B cell (primary cell): ENCODE measurements at regions of chr11 and their contacts with region 1.

Region 1: GRCh38 chr11:33257897-33258630 is 883 bp downstream of the HIPK3 start:
- DNase-seq: peak; percentile 86
- ATAC-seq: peak; percentile 34
- H3K4me3 ChIP-seq: peak overlapping the region; percentile 78 to 97 (median 90)
- H3K4me3 Mint-ChIP-seq: peak overlapping the region; percentile 93
- H3K27ac ChIP-seq: peak overlapping the region; percentile 98 to 99
- H3K27ac Mint-ChIP-seq: peak overlapping the region; percentile 100
- H3K4me1 ChIP-seq: peaks cover 22 to 26% of the 10 kb centered on the region in 2 donors
- H3K4me1 Mint-ChIP-seq: peaks cover 49% of the 10 kb centered on the region
- H3K27me3 ChIP-seq: no peaks in the 10 kb centered on the region
- H3K27me3 Mint-ChIP-seq: no peaks in the 10 kb centered on the region
- CTCF ChIP-seq: no peak

Region 2: GRCh38 chr11:33039274-33040032 is 218.6 kb before region 1 on chr11 and contains the start of gene TCP11L1:
- CTCF ChIA-PET with region 1: no interaction called
- POLR2A ChIA-PET with region 1: no interaction called
- intact Hi-C with region 1: loop called (anchors 2 kb)
- DNase-seq: peak; percentile 90
- ATAC-seq: peak; percentile 84
- H3K4me3 ChIP-seq: peak within 1 kb of the TSS; percentile 77 to 99 (median 95)
- H3K4me3 Mint-ChIP-seq: peak within 1 kb of the TSS; percentile 96
- H3K27ac ChIP-seq: peak within 1 kb of the TSS; percentile 79 to 88
- H3K27ac Mint-ChIP-seq: peak within 1 kb of the TSS; percentile 94
- H3K4me1 ChIP-seq: peaks cover 8 to 18% of the 10 kb centered on the region in 2 donors
- H3K4me1 Mint-ChIP-seq: peaks cover 16% of the 10 kb centered on the region
- H3K27me3 ChIP-seq: no peaks in the 10 kb centered on the region
- H3K27me3 Mint-ChIP-seq: peaks cover 8% of the 10 kb centered on the region
- CTCF ChIP-seq: no peak
- total RNA-seq, gene TCP11L1: 19.7 and 19.8 TPM in 2 replicates

Region 3: GRCh38 chr11:33344611-33345010 is 86.5 kb after region 1 on chr11:
- CTCF ChIA-PET with region 1: no interaction called
- POLR2A ChIA-PET with region 1: no interaction called
- intact Hi-C with region 1: loop called (anchors 5 kb)
- DNase-seq: no peak
- ATAC-seq: no peak
- H3K4me3 ChIP-seq: no peak overlapping the region
- H3K4me3 Mint-ChIP-seq: no peak overlapping the region
- H3K27ac ChIP-seq: peak overlapping the region in 1 of 2 donors; percentile 21
- H3K27ac Mint-ChIP-seq: no peak overlapping the region
- H3K4me1 ChIP-seq: peaks cover 14 to 17% of the 10 kb centered on the region in 2 donors
- H3K4me1 Mint-ChIP-seq: peaks cover 23% of the 10 kb centered on the region
- H3K27me3 ChIP-seq: no peaks in the 10 kb centered on the region
- H3K27me3 Mint-ChIP-seq: no peaks in the 10 kb centered on the region
- CTCF ChIP-seq: no peak

Region 4: DNA sequence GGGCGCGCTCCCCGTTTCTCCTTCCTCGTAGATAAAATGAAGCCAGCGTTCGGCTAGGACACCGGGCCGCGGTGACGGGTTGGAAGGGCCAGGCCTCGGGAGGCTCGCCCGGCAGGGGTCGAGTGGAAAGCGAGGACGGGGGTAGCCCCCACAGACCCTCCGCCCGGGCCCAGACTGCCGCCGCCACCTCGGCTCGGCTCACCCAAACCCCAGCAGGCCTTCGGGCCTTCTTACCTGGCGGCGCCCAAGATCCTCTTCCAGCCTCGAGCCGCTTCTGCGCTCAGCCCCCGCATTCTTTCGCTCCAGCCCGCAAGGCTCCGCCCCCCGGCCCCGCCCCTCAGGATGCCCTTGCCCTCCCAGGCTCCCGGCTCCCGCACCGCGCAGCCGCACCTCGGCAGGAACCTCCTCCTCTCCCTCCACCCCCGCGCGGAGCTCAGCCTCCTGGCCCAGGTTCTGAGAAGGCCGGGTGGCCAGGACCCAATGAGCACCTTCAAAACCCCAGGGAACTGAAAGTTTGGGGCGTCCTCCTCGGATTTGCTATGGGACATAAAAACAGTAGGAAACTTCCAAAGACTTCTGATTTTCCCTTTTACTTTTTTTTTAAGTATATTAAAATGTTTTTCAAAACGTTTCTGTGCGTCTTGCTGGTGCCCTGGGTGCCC is 478.2 kb after region 1 on chr11 and contains the start of gene CD59:
- CTCF ChIA-PET with region 1: no interaction called
- POLR2A ChIA-PET with region 1: no interaction called
- intact Hi-C with region 1: loop called (anchors 2 kb)
- DNase-seq: peak; percentile 86
- ATAC-seq: peak; percentile 82
- H3K4me3 ChIP-seq: peak within 1 kb of the TSS; percentile 61 to 89 (median 85)
- H3K4me3 Mint-ChIP-seq: peak within 1 kb of the TSS; percentile 92
- H3K27ac ChIP-seq: peak within 1 kb of the TSS; percentile 57 to 70
- H3K27ac Mint-ChIP-seq: peak within 1 kb of the TSS; percentile 84
- H3K4me1 ChIP-seq: peaks cover 23 to 31% of the 10 kb centered on the region in 2 donors
- H3K4me1 Mint-ChIP-seq: peaks cover 37% of the 10 kb centered on the region
- H3K27me3 ChIP-seq: no peaks in the 10 kb centered on the region
- H3K27me3 Mint-ChIP-seq: no peaks in the 10 kb centered on the region
- CTCF ChIP-seq: no peak
- total RNA-seq, gene CD59: 41.3 and 44.5 TPM in 2 replicates